ENCODE measurements at regions of chr7 and their contacts with region 1.

Region 1: DNA sequence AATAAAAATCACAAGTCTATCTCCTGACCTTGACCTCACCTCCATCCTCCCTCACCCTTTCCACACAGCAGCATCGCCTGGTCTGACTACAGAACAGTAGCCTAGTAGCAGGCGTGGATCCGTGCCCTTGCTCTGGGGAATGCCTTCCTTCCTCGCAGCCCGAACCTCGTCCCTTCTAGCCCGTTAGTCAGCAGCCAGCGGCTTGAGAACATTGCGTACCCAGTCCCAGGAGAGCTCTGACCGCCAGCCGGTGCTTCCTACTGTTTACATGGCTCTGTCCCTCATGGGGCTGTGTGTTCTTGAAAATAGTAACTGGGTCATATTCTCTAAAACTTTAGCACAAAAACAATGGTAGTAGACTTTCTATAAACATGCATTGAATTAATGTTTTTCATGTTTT is 682.7 kb upstream of the IGFBP3 start:
- DNase-seq: no peak
- H3K4me3 ChIP-seq: no peak overlapping the region
- H3K27me3 ChIP-seq: no peaks in the 10 kb centered on the region
- CTCF ChIP-seq: no peak

Region 2: DNA sequence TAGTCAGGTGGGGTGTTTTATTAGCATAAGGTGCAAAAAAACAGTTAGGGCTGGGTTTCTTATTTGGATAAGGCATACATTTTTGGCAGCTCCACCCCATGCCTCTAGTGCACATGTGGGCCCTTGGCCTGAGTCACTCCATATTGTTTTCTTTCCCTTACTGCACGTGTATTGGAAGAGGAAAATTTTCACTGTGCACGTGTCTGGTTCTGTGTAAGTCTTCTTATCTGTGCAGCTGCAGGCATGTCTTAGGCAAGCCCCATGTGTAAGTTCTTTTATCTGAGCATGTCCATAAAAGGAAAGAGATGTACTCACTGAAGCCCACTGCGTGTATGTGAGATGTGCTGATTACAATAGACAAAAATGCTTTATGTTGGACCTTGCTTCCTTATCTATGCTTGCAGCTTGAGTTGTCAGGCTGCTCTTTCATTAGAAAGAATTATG is 142.4 kb before region 1 on chr7:
- CTCF ChIA-PET with region 1: no interaction called
- POLR2A ChIA-PET with region 1: no interaction called
- DNase-seq: no peak
- H3K4me3 ChIP-seq: no peak overlapping the region
- H3K27me3 ChIP-seq: no peaks in the 10 kb centered on the region
- CTCF ChIP-seq: no peak

Region 3: DNA sequence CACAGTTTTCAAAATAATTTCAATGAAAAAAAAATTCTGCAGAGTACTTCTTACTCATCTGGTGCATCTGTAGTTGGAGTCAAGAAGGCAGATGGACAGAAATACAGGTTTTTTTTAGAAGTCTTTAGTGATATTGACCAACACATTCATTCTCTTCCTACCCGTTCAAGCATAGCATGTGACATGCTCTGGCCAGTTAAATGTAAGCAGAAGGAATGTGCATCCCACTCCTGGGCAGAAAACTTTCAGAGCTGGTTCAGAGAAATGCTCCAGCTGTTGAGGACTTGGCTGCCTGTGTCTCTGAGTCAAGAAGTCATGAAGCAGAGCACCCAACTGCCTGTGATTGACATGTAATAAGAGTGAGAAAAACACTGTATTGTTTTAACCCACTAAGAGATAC is 17.4 kb before region 1 on chr7:
- CTCF ChIA-PET with region 1: interaction called, 10 read pairs
- POLR2A ChIA-PET with region 1: no interaction called
- DNase-seq: no peak
- H3K4me3 ChIP-seq: no peak overlapping the region
- H3K27me3 ChIP-seq: no peaks in the 10 kb centered on the region
- CTCF ChIP-seq: no peak

Region 4: GRCh38 chr7:46626691-46627310 is 23.0 kb after region 1 on chr7:
- CTCF ChIA-PET with region 1: no interaction called
- POLR2A ChIA-PET with region 1: no interaction called
- DNase-seq: peak; percentile 51
- H3K4me3 ChIP-seq: no peak overlapping the region
- H3K27me3 ChIP-seq: no peaks in the 10 kb centered on the region
- CTCF ChIP-seq: no peak